AG04450 (cell line): ENCODE measurements at regions of chr12 and their contacts with region 1.

Region 1: GRCh38 chr12:88153959-88154358 is 11.9 kb downstream of the TMTC3 start:
- DNase-seq: peak; percentile 20
- H3K4me3 ChIP-seq: no peak overlapping the region
- H3K27ac ChIP-seq: no peak overlapping the region
- H3K27me3 ChIP-seq: no peaks in the 10 kb centered on the region
- CTCF ChIP-seq: peak; percentile 41

Region 2: GRCh38 chr12:87883806-87884205 is 270.2 kb before region 1 on chr12:
- CTCF ChIA-PET with region 1: no interaction called
- POLR2A ChIA-PET with region 1: no interaction called
- DNase-seq: no peak
- H3K4me3 ChIP-seq: no peak overlapping the region
- H3K27ac ChIP-seq: no peak overlapping the region
- H3K27me3 ChIP-seq: no peaks in the 10 kb centered on the region
- CTCF ChIP-seq: no peak

Region 3: GRCh38 chr12:88266806-88267360 is 112.9 kb after region 1 on chr12:
- CTCF ChIA-PET with region 1: no interaction called
- POLR2A ChIA-PET with region 1: no interaction called
- DNase-seq: no peak
- H3K4me3 ChIP-seq: no peak overlapping the region
- H3K27ac ChIP-seq: no peak overlapping the region
- H3K27me3 ChIP-seq: no peaks in the 10 kb centered on the region
- CTCF ChIP-seq: no peak

Region 4: DNA sequence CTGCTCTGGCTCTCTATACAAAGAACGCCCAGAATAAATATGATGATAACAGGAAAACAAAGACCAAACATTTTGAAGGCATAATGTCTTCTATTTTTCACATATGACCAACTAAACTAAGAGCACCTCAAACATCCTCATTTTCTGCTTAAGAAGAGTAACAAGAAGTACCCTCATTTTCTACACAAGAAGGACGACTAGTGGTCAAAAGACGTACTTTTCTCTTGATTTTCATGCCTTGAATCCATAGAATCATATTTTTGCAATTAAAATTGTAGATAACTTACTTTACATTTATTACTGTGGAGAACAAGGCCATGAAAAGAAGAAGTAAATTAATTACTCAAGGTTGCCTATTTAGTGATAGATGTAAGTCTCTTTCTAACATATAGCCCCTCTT is 839.7 kb after region 1 on chr12:
- CTCF ChIA-PET with region 1: interaction called, 27 read pairs
- POLR2A ChIA-PET with region 1: no interaction called
- DNase-seq: peak; percentile 44
- H3K4me3 ChIP-seq: no peak overlapping the region
- H3K27ac ChIP-seq: no peak overlapping the region
- H3K27me3 ChIP-seq: no peaks in the 10 kb centered on the region
- CTCF ChIP-seq: peak; percentile 60